Activated T-helper 2 cell treated with anti-CD3 and anti-CD28 coated beads, Interferon-gamma antibody, Interleukin-2, Interleukin-4, amounts not matched to agents 10 μg/mL and 5 μg/mL and 100 μg/mL, durations not matched to agents 14 hours and 24 hours and 36 hours (primary cell): ENCODE measurements at regions of chr7 and their contacts with region 1.

Region 1: DNA sequence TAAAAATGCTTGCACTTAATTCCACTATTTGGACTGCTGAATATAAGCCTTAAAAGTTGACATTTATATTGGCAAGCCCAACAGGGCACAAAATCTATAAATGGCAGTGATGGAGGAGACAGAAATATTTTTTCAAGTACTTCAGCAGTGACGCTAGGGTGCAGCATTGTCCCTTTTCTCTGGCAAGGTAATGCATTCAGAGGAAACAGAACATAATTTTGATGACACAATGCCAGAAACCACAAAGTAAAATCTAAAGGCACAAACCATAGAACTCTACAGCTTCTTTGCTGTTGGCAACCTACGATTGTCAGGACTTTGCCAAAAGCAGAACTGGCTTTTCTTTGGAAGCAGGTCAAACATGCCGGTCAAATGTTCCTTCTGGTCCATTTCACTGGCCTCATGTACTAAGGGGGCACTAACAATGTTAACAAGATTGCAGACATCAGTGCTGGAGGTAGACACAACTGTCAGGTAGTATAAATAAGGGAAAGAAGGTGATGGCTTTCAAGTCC is 30.9 kb upstream of the FAM133B start:
- DNase-seq: peak; percentile 73
- H3K4me3 Mint-ChIP-seq: peak overlapping the region; percentile 37
- H3K27ac Mint-ChIP-seq: peak overlapping the region; percentile 87
- H3K4me1 Mint-ChIP-seq: peaks cover 57% of the 10 kb centered on the region
- H3K27me3 Mint-ChIP-seq: no peaks in the 10 kb centered on the region

Region 2: DNA sequence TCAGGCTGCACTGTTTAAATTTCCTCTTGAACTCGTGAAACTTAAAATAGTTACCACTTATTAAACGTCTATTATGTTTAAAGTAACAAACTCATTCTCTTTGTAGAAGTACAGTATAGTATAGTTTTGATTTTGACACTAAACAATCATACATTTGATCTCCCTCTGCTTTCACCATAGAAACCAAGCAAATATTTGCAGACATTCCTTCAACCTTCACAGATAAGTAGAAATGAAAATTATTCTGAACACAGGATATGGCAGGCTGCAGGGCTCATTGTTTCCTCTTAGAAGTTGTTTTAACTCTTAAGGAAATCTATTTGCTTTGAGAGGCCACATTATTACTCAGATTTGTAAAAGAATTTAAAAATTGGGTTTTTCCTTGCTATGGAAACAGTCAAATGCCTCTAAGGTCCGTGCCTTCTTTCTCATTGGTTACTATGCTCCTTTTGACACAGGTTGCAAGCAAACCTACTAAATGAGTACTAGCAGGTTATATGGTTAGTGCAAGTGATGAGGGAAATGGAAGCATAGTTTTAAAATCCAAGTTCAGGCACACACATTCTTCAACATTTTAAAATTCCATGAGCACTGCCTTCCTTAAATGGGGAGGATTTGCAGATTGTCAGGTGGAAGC is 61.9 kb after region 1 on chr7:
- intact Hi-C with region 1: loop called (anchors 1 kb)
- DNase-seq: no peak
- H3K4me3 Mint-ChIP-seq: peak overlapping the region; percentile 60
- H3K27ac Mint-ChIP-seq: peak overlapping the region; percentile 93
- H3K4me1 Mint-ChIP-seq: peaks cover 84% of the 10 kb centered on the region
- H3K27me3 Mint-ChIP-seq: no peaks in the 10 kb centered on the region

Region 3: GRCh38 chr7:92708111-92709042 is 87.3 kb after region 1 on chr7:
- intact Hi-C with region 1: loop called (anchors 2 kb)
- DNase-seq: no peak
- H3K4me3 Mint-ChIP-seq: no peak overlapping the region
- H3K27ac Mint-ChIP-seq: peak overlapping the region; percentile 64
- H3K4me1 Mint-ChIP-seq: peaks cover 43% of the 10 kb centered on the region
- H3K27me3 Mint-ChIP-seq: no peaks in the 10 kb centered on the region

Region 4: DNA sequence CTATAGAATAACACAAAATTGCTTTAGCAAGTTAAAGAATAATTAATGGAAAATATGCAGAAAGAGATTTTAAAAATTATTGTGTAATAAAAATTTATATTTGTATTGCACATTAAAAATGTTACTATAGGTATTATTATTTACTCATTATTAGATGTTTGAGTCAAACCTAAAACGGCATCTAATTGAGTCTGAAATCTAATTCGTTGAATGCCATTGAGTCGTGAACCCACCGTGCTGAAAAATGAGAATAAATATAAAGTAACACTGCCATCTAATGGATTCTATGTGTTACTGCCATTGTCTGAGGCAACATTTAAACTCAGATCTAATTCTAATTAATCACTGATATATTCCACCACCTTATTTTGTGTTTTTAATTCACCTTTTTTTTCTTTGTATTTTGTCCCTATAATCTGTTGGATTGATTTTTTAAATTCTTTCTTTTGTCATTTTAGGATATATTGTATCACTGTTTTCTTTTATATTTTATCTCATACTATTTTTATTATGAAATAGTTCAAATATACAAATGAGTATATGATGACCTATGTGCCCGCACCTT is 434.5 kb after region 1 on chr7:
- intact Hi-C with region 1: loop called (anchors 1 kb)
- DNase-seq: no peak
- H3K4me3 Mint-ChIP-seq: no peak overlapping the region
- H3K27ac Mint-ChIP-seq: no peak overlapping the region
- H3K4me1 Mint-ChIP-seq: peaks cover 21% of the 10 kb centered on the region
- H3K27me3 Mint-ChIP-seq: no peaks in the 10 kb centered on the region